ENCODE measurements at regions of chr17 and their contacts with region 1.

Region 1: GRCh38 chr17:7687908-7688807 is at the start of gene WRAP53:
- DNase-seq: peak; percentile 99
- H3K4me3 Mint-ChIP-seq: peak within 1 kb of the TSS; percentile 93
- H3K27ac Mint-ChIP-seq: peak within 1 kb of the TSS; percentile 97
- H3K4me1 Mint-ChIP-seq: peaks cover 24% of the 10 kb centered on the region
- H3K27me3 Mint-ChIP-seq: no peaks in the 10 kb centered on the region
- total RNA-seq, gene WRAP53: 33.8 and 35.0 TPM in 2 replicates

Region 2: GRCh38 chr17:7351665-7352501 is 336.3 kb before region 1 on chr17 and contains the start of gene KCTD11:
- intact Hi-C with region 1: loop called (anchors 2 kb)
- DNase-seq: peak; percentile 94
- H3K4me3 Mint-ChIP-seq: peak within 1 kb of the TSS; percentile 88
- H3K27ac Mint-ChIP-seq: peak within 1 kb of the TSS; percentile 92
- H3K4me1 Mint-ChIP-seq: peaks cover 33% of the 10 kb centered on the region
- H3K27me3 Mint-ChIP-seq: no peaks in the 10 kb centered on the region
- total RNA-seq, gene KCTD11: 7.0 and 7.6 TPM in 2 replicates

Region 3: DNA sequence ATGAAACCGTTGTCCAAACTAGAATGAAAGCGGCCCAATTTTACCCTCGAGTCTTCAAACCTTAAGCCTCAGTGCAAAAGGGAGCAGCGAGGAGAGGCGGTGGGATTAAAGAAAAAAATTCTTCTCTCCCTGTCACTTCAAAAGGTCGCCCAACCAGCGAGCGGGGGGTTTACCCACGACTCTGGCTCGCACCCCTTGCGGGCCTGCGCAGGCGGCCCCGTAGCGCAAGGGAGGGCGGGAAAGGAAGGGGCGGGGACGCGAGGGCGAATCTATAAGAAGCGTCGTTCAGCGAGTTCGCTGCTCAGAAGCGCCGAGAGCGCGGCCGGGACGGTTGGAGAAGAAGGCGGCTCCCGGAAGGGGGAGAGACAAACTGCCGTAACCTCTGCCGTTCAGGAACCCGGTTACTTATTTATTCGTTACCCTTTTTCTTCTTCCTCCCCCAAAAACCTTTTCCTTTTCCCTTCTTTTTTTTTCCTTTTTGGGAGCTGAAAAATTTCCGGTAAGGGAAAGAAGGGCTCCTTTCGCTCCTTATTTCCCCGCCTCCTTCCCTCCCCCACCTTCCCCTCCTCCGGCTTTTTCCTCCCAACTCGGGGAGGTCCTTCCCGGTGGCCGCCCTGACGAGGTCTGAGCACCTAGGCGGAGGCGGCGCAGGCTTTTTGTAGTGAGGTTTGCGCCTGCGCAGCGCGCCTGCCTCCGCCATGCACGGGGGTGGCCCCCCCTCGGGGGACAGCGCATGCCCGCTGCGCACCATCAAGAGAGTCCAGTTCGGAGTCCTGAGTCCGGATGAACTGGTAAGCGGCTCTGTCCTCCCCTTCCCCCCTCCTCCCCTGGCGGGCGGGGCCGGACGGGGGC is 203.9 kb before region 1 on chr17 and contains the start of gene POLR2A:
- intact Hi-C with region 1: loop called (anchors 2 kb)
- DNase-seq: peak; percentile 99
- H3K4me3 Mint-ChIP-seq: peak within 1 kb of the TSS; percentile 88
- H3K27ac Mint-ChIP-seq: peak within 1 kb of the TSS; percentile 100
- H3K4me1 Mint-ChIP-seq: peaks cover 55% of the 10 kb centered on the region
- H3K27me3 Mint-ChIP-seq: no peaks in the 10 kb centered on the region
- total RNA-seq, gene POLR2A: 226 and 230 TPM in 2 replicates

Region 4: GRCh38 chr17:7614422-7615264 is 73.5 kb before region 1 on chr17 and contains the start of gene FXR2:
- intact Hi-C with region 1: loop called (anchors 1 kb)
- DNase-seq: peak; percentile 99
- H3K4me3 Mint-ChIP-seq: peak within 1 kb of the TSS; percentile 87
- H3K27ac Mint-ChIP-seq: peak within 1 kb of the TSS; percentile 91
- H3K4me1 Mint-ChIP-seq: peaks cover 33% of the 10 kb centered on the region
- H3K27me3 Mint-ChIP-seq: no peaks in the 10 kb centered on the region
- total RNA-seq, gene FXR2: 62.6 and 64.4 TPM in 2 replicates

Region 5: GRCh38 chr17:7650509-7651096 is 37.6 kb before region 1 on chr17 and contains the start of gene ATP1B2:
- intact Hi-C with region 1: loop called (anchors 1 kb)
- DNase-seq: peak; percentile 92
- H3K4me3 Mint-ChIP-seq: peak within 1 kb of the TSS; percentile 82
- H3K27ac Mint-ChIP-seq: peak within 1 kb of the TSS; percentile 23
- H3K4me1 Mint-ChIP-seq: peaks cover 15% of the 10 kb centered on the region
- H3K27me3 Mint-ChIP-seq: peaks cover 57% of the 10 kb centered on the region
- total RNA-seq, gene ATP1B2: 0.14 and 0.37 TPM in 2 replicates

Region 6: DNA sequence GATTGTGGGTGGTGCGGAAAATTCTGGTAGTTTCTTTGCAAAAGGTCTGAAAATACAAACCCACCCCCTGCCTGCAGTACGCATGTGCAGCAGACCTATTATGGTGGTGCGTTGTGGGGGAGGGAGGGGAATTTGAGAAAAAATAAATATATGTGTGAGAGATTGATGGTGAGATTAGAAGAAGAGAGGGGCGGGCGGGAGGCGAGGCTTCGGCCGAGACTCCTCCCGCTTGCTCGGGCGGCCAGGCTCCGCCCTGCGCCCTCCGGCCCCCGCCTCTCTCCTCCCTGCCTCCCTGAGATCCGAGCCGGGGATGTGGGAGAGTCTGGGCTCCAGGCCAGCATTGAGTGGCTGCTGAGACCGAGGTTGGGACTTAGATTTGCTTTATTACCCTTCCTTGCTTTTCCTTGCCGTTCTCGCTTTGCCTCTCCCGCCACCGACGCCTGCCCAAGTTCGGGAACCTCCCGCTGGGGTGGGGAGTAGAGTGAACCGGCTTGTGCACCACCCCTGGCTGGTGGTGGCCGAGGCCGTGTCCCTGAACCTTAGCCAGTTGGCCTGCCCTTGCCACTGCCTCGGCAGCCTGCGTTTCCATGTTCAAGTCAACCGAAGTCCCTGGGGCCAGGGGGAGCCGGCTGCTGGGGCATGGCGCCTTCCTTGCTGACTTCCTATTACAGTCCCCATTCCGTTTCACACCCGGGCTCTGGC is 199.5 kb after region 1 on chr17:
- intact Hi-C with region 1: loop called (anchors 5 kb)
- DNase-seq: peak; percentile 95
- H3K4me3 Mint-ChIP-seq: no peak overlapping the region
- H3K27ac Mint-ChIP-seq: no peak overlapping the region
- H3K4me1 Mint-ChIP-seq: peaks cover 9% of the 10 kb centered on the region
- H3K27me3 Mint-ChIP-seq: no peaks in the 10 kb centered on the region

Region 7: GRCh38 chr17:8156246-8156992 is 468.3 kb after region 1 on chr17:
- intact Hi-C with region 1: loop called (anchors 10 kb)
- DNase-seq: peak; percentile 100
- H3K4me3 Mint-ChIP-seq: no peak overlapping the region
- H3K27ac Mint-ChIP-seq: no peak overlapping the region
- H3K4me1 Mint-ChIP-seq: peaks cover 62% of the 10 kb centered on the region
- H3K27me3 Mint-ChIP-seq: no peaks in the 10 kb centered on the region